ENCODE measurements at regions of chr9 and their contacts with region 1.

Region 1: DNA sequence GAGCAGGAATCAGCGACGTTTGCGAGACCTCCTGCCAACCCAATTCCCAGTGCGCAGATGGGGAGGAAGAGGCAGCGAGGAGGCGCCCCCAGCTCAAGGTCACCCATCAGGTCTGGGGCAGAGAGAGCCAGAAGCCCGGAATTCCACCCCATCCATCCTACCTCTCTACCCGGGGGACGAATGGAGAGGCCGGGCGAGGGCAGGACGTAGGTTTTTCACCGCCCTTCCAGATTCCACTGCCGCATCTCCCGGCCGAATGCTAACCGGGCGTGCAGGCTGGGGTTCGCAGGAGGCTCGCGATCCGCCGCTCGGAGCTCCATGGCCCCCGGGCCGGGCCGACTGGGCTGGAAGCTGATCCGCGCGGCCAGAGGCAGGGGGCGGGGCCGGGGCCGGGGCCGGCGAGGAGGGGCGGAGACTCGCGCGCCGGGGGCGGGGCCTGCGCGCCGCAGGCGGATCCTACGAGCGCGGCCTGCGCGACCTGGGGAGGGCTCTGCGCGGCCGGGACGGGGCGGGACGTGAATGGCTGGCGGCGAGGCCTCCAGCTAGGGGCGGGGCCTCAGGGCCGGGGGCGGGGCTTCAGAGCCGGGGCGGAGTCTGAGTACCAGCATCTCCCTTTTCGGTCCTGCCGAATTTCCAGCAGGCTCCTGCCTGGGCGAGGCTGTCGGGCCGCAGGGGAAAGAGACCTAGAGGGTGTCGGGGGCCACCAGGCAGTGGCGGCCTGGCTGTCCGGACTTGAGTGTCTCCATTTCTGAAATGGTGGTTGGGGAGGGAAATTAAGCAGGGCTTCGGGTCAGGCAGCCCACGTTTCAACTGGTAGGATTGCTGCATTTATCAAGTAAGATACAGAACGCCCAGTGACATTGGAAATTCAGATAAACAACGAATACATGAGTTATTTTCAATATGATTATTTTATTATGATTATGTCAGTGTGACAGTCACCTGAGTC is at the start of gene ST6GALNAC4:
- DNase-seq: peak; percentile 98
- ATAC-seq: peak; percentile 95
- total RNA-seq, gene ST6GALNAC4: 21.9 TPM

Region 2: DNA sequence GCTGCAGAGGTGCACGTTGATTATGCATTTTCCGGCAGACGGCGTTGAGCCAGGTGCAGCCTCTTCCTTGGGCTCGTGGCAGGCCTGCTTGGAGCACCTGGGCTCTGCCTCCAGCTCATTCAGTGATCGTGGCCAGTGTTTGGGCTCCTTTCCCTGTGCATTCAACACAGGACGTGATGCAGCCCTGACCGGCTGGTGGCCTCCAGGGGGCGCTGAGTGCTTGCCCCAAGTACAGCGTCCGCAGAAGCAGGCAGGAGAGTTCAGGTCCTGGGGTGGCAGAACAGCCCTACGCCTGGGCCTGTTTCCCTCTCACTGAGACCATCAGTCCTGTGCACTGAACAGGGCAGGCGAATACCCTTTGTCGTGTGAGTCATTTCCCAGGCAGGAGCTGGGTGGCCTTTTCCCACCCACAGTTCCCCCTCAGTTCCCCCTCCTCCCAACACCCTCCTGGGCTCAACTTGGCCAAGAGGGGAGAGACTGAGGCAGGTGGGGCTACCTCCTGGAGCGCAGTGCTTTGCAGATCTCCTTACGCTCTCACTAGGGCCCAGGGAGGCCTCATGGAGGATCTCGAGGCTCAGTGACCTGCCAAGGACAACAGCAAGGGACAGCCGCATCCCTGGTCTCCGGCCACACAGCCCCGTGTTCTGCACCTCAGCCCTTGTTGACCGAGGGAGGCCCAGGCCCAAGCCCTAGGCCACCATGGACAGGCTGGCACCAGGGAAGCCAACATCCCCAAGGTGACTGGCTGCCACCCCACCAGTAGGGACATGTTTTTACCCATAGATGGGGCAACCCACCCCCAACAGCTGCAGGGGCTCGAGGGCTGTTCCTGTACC is 412.8 kb before region 1 on chr9:
- intact Hi-C with region 1: loop called (anchors 5 kb)
- DNase-seq: peak; percentile 92
- ATAC-seq: peak; percentile 80

Region 3: GRCh38 chr9:127586537-127586936 is 330.4 kb before region 1 on chr9:
- intact Hi-C with region 1: loop called (anchors 1 kb)
- DNase-seq: peak; percentile 84
- ATAC-seq: peak; percentile 92

Region 4: GRCh38 chr9:127734747-127735529 is 182.0 kb before region 1 on chr9 and contains the start of gene TOR2A:
- intact Hi-C with region 1: loop called (anchors 1 kb)
- DNase-seq: peak; percentile 99
- ATAC-seq: peak; percentile 96
- total RNA-seq, gene TOR2A: 3.8 TPM

Region 5: DNA sequence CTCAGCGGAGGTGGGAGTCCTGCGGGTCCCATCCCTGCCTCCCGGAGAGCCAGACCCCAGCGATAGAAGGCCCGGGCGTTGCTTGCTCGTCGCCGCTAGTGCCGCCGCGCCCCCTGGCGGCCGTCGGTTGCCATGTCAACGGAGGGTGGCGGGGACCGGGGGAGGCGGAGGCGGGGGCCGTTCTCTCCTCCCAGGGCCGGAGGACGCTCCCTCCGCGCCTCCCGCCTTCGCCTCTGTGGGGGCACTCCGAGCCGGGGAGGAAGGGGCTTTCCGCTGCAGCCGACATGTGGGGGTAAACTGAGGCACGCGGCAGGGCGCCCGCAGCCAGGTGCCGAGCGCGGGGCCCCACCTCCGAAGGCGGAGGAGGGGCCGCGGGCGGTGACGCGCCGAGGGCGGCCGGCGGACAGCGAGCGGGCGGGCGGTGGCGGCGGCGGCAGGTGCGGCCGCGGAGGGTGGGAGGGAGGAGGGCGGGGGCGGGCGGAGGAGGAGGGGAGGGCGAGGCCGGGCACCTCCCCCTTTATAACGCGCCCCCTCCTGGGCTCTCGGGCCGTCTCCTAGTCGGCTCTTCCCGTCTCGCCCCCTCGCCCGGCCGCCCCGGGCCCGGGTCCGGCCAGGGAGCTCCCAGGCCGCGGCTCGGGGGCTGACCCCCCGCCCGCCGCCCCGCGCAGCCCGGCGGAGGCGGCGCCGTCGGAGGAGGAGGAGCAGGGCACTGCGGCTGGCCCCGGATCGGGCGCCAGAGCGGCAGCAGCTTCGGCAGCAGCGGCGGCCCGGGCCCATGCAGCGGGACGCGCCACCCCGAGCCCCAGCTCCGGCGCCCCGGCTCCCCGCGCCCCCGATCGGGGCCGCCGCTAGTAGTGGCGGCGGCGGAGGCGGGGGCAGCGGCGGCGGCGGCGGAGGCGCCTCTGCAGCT is 131.7 kb before region 1 on chr9:
- intact Hi-C with region 1: loop called (anchors 5 kb)
- DNase-seq: peak; percentile 95
- ATAC-seq: peak; percentile 70

Region 6: GRCh38 chr9:127877566-127877998 is 39.4 kb before region 1 on chr9 and contains the start of gene AK1:
- intact Hi-C with region 1: loop called (anchors 5 kb)
- DNase-seq: peak; percentile 85
- ATAC-seq: peak; percentile 83
- total RNA-seq, gene AK1: 880 TPM